CD8-positive, alpha-beta T cell (primary cell): ENCODE measurements at regions of chr1 and their contacts with region 1.

Region 1: DNA sequence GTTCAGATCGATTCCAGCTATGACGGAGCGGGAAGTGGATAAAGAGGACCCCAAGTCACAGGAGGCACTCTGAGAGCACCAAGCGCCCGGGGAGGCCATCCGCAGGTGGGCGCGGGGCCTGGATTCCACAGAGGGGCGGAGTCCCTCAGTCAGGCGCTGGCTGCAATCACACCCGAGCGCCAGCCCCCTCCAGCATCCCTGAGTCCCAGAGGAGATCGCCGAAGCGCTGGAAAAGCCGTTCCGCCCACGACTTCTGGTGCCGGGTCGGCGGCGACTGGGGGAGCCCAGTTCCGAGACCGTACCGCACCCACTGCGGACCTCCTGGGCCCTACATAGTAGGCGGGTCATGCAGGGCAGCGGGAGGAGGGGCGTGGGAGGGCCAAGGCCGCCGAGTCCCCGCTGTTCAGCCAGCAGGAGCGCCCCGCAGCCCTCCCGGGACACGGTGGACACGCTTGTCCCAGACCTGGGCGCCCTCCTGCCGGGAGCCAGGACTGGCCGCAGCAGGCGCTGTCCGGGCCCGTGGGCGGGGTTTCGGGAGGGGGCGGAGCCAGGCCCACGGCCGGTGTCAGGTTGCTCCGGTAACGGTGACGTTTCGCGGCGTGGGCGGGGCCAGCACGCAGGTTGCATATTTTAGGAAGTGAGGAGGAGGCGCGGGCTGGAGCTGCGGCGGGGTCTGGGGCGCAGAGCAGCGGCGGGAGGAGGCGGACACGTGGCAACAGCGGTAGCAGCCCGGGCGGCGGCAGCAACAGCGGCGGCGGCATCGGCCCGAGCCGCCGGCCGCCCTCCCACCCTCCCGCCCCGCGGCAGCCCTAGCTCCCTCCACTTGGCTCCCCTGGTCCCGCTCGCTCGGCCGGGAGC is at the start of gene ATP1A1:
- DNase-seq: peak; percentile 93 to 99 (median 98)
- ATAC-seq: peak; percentile 66
- H3K4me3 ChIP-seq: peak within 1 kb of the TSS; percentile 73 to 80
- H3K4me3 Mint-ChIP-seq: peak within 1 kb of the TSS; percentile 96
- H3K27ac ChIP-seq: peak within 1 kb of the TSS; percentile 83 to 92
- H3K27ac Mint-ChIP-seq: peak within 1 kb of the TSS; percentile 97
- H3K4me1 ChIP-seq: peaks cover 35% of the 10 kb centered on the region
- H3K4me1 Mint-ChIP-seq: peaks cover 47% of the 10 kb centered on the region
- H3K27me3 ChIP-seq: no peaks in the 10 kb centered on the region
- H3K27me3 Mint-ChIP-seq: no peaks in the 10 kb centered on the region
- CTCF ChIP-seq: no peak
- total RNA-seq, gene ATP1A1: 204 to 211 TPM

Region 2: DNA sequence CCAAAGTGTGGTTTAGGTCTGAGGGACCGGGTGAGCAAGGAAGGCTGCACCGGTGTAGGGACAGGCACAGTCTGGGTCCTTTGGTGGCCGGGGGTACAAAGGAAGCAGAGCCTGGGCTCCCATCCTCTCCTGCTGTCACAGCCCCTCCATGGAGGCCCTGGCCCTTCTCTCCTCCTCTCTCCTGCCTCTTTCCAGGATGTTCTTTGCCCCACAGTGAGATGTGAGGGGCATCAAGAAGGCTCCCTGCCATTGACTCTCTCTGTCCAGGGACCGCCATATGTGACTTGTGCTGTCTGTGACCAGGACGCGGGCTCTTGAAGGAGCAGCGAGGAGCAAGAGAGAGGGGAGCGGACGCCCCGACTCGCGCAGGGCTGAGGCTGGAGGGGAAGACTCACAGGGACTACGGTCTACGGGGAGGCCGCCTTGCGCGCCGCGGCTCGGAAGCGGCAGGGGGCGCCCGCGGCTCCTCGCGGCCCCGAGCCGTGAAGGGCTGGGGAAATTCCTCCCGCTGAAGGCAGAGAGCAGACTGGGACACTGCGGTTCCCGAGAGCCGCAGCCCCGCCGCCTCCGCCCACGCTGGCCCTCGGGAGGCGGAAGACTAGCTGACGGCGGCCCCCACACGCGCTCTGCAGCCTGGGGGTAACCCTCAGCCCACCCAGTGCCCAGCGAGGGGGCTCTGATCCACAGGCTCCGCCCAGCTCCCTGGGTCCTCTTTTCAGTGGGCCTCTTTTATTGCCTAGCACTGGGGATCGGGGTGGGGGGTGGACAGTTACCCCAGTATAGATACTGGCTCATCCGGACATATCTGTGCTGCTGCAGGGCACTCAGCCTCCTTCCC is 220.9 kb before region 1 on chr1:
- CTCF ChIA-PET with region 1: interaction called, 4 read pairs
- POLR2A ChIA-PET with region 1: no interaction called
- intact Hi-C with region 1: loop called (anchors 5 kb)
- DNase-seq: peak; percentile 58 to 93 (median 76)
- ATAC-seq: peak; percentile 91
- H3K4me3 ChIP-seq: peak overlapping the region; percentile 35 to 52
- H3K4me3 Mint-ChIP-seq: peak overlapping the region; percentile 79
- H3K27ac ChIP-seq: peak overlapping the region; percentile 17 to 46
- H3K27ac Mint-ChIP-seq: peak overlapping the region; percentile 92
- H3K4me1 ChIP-seq: peaks cover 26% of the 10 kb centered on the region
- H3K4me1 Mint-ChIP-seq: peaks cover 30% of the 10 kb centered on the region
- H3K27me3 ChIP-seq: no peaks in the 10 kb centered on the region
- H3K27me3 Mint-ChIP-seq: no peaks in the 10 kb centered on the region
- CTCF ChIP-seq: peak; percentile 93

Region 3: GRCh38 chr1:116345843-116346242 is 27.0 kb before region 1 on chr1:
- CTCF ChIA-PET with region 1: no interaction called
- POLR2A ChIA-PET with region 1: interaction called, 8 read pairs
- intact Hi-C with region 1: loop called in 1 of 2 experiments (anchors 1 kb)
- DNase-seq: peak; percentile 18 to 89 (median 64)
- ATAC-seq: peak; percentile 93
- H3K4me3 ChIP-seq: no peak overlapping the region
- H3K4me3 Mint-ChIP-seq: no peak overlapping the region
- H3K27ac ChIP-seq: peak overlapping the region; percentile 45 to 52
- H3K27ac Mint-ChIP-seq: peak overlapping the region; percentile 90
- H3K4me1 ChIP-seq: peaks cover 42% of the 10 kb centered on the region
- H3K4me1 Mint-ChIP-seq: peaks cover 61% of the 10 kb centered on the region
- H3K27me3 ChIP-seq: peaks cover 0 to 3% of the 10 kb centered on the region in 2 experiments
- H3K27me3 Mint-ChIP-seq: no peaks in the 10 kb centered on the region
- CTCF ChIP-seq: no peak

Region 4: GRCh38 chr1:116504308-116505156 is 131.7 kb after region 1 on chr1:
- CTCF ChIA-PET with region 1: no interaction called
- POLR2A ChIA-PET with region 1: no interaction called
- intact Hi-C with region 1: loop called (anchors 2 kb)
- DNase-seq: peak; percentile 71 to 97 (median 88)
- ATAC-seq: peak; percentile 93
- H3K4me3 ChIP-seq: no peak overlapping the region
- H3K4me3 Mint-ChIP-seq: peak overlapping the region; percentile 19
- H3K27ac ChIP-seq: peak overlapping the region; percentile 22 to 92
- H3K27ac Mint-ChIP-seq: peak overlapping the region; percentile 91
- H3K4me1 ChIP-seq: peaks cover 26% of the 10 kb centered on the region
- H3K4me1 Mint-ChIP-seq: peaks cover 42% of the 10 kb centered on the region
- H3K27me3 ChIP-seq: no peaks in the 10 kb centered on the region
- H3K27me3 Mint-ChIP-seq: no peaks in the 10 kb centered on the region
- CTCF ChIP-seq: no peak

Region 5: GRCh38 chr1:116769561-116769977 is 396.8 kb after region 1 on chr1:
- CTCF ChIA-PET with region 1: no interaction called
- POLR2A ChIA-PET with region 1: no interaction called
- intact Hi-C with region 1: loop called in 1 of 2 experiments (anchors 5 kb)
- DNase-seq: peak in 8 of 9 experiments; percentile 44 to 94 (median 76)
- ATAC-seq: peak; percentile 75
- H3K4me3 ChIP-seq: peak overlapping the region in 1 of 2 experiments; percentile 14
- H3K4me3 Mint-ChIP-seq: peak overlapping the region; percentile 55
- H3K27ac ChIP-seq: peak overlapping the region; percentile 42 to 87
- H3K27ac Mint-ChIP-seq: peak overlapping the region; percentile 96
- H3K4me1 ChIP-seq: peaks cover 83% of the 10 kb centered on the region
- H3K4me1 Mint-ChIP-seq: peaks cover 86% of the 10 kb centered on the region
- H3K27me3 ChIP-seq: no peaks in the 10 kb centered on the region
- H3K27me3 Mint-ChIP-seq: no peaks in the 10 kb centered on the region
- CTCF ChIP-seq: no peak